Dendritic cell treated with granulocyte-macrophage colony-stimulating factor and Interleukin-4, amounts not matched to agents 40 ng/mL and 50 ng/mL, for 4 days (primary cell): ENCODE measurements at regions of chr3 and their contacts with region 1.

Region 1: DNA sequence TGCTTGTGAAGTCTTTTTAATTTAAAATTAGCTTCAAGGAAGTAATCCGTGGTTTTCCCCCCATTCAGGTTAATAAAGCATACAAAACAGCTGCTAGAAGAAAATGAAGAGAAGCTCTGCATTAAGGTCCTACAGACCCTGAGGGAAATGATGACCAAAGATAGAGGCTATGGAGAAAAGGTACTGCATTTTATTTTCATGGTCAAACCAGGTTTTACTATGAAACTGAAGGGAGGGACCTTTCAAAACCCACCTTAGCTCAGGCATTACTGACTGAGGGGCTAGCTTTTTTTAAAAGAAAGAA is 218.5 kb downstream of the ITPR1 start:
- H3K4me3 Mint-ChIP-seq: no peak overlapping the region
- H3K27ac Mint-ChIP-seq: no peak overlapping the region
- H3K4me1 Mint-ChIP-seq: peaks cover 9% of the 10 kb centered on the region
- H3K27me3 Mint-ChIP-seq: no peaks in the 10 kb centered on the region

Region 2: DNA sequence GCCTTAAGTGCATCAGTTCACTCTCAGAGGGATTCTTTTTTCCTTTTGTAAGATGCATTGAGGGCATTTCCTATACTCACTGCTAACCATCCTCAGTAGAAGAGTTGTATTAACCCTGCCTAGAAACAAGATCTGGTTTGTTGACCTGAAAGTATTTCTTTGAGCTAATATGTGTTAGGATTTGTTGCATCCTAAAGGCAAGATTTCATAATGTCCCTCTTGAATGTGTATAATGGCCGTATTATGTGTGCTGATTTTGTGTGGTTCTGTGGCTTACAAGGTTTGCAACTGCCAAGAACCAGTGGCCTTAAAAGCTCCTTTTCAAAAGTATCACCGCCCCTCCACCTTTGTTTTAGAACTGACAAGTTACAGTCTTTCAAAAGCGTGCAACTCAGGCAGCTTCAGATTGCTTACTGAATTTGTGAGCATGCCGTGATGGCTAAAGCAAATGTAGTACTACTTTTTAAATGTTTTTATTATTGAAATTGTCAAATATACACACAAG is 85.6 kb after region 1 on chr3:
- intact Hi-C with region 1: no loop called
- H3K4me3 Mint-ChIP-seq: no peak overlapping the region
- H3K27ac Mint-ChIP-seq: no peak overlapping the region
- H3K4me1 Mint-ChIP-seq: peaks cover 19% of the 10 kb centered on the region
- H3K27me3 Mint-ChIP-seq: no peaks in the 10 kb centered on the region

Region 3: DNA sequence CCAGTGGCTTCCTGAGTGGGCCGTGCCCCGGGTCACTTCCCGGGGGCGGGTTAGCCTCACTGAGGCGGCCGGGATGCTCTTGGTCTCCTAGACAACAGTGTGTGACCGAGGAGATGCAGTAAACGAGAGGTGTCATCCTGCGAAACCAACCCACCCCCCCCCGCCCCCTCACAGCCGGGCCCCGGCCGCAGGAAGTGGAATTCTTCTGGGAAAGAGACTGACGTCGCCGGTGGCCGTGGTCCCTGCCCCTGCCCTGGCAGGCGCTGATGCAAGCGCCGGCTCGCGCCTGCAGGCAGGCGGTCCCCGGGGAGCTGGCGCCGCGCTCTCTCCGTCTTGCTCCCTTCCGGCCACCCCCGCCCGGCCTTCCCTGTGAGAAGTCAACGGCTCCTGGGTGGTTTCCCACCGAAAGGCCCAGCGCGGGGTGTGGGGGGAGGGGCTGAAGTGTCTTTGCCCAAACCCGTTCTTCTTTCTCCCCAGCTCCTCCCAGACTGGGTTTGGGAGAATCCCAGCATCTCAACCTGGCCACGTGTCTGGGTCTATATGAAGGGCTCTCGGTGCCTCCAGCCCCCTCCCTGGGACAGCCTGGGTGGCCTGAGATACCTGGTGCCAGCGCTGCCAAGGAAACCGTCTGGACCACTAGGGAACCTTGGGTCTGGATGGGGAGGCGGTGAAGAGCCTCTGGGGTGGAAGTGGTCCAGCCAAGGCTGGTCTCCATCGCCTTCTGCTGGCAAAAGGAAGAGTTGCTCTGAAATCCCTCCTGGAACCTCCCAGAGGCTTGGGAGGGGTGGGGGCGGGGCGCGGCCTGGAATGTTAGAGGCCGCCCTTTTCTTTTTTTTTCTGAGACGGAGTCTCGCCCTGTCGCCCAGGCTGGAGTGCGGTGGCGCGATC is 314.9 kb after region 1 on chr3:
- intact Hi-C with region 1: loop called (anchors 1 kb)
- H3K4me3 Mint-ChIP-seq: peak overlapping the region; percentile 89
- H3K27ac Mint-ChIP-seq: peak overlapping the region; percentile 93
- H3K4me1 Mint-ChIP-seq: peaks cover 41% of the 10 kb centered on the region
- H3K27me3 Mint-ChIP-seq: peaks cover 1% of the 10 kb centered on the region

Region 4: DNA sequence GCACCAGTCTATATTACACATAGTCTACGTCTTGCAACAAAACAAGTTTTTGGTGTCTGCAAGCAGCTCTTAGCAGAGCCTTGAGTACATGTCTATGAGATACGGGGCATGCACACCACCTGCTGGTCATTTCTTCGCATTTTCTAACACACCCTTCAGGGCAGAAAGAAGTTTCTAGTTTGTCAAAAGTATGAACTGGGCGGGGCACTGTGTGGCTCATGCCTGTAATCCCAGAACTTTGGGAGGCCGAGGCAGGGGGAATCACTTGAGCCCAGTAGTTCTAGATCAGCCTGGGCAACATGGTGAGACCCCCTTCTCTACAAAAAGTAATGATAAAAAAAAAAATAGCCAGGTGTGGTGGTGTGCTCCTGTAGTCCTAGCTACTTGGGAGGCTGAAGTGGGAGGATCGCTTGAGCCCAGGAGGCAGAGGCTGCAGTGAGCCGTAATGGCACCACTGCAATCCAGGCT is 346.2 kb after region 1 on chr3:
- intact Hi-C with region 1: loop called (anchors 2 kb)
- H3K4me3 Mint-ChIP-seq: no peak overlapping the region
- H3K27ac Mint-ChIP-seq: peak overlapping the region; percentile 26
- H3K4me1 Mint-ChIP-seq: peaks cover 54% of the 10 kb centered on the region
- H3K27me3 Mint-ChIP-seq: peaks cover 4% of the 10 kb centered on the region